Caco-2 (cell line): ENCODE measurements at regions of chr19 and their contacts with region 1.

Region 1: GRCh38 chr19:47713046-47714021 is at the start of gene EHD2:
- DNase-seq: peak in 1 of 2 experiments; percentile 74
- H3K4me3 ChIP-seq: peak within 1 kb of the TSS; percentile 33
- H3K4me3 Mint-ChIP-seq: peak within 1 kb of the TSS; percentile 77
- H3K27ac Mint-ChIP-seq: peak within 1 kb of the TSS; percentile 12
- H3K4me1 ChIP-seq: 0 out of 2 replicates have a peak, but pooled peaks cover 4% of the 10 kb centered on the region
- H3K4me1 Mint-ChIP-seq: peaks cover 10% of the 10 kb centered on the region
- H3K27me3 ChIP-seq: no peaks in the 10 kb centered on the region
- H3K27me3 Mint-ChIP-seq: no peaks in the 10 kb centered on the region
- CTCF ChIP-seq: peak; percentile 90 to 98
- total RNA-seq, gene EHD2: 13.3 and 14.6 TPM in 2 replicates

Region 2: GRCh38 chr19:47637550-47637949 is 75.8 kb before region 1 on chr19:
- CTCF ChIA-PET with region 1: no interaction called
- POLR2A ChIA-PET with region 1: no interaction called
- intact Hi-C with region 1: no loop called
- DNase-seq: no peak
- H3K4me3 ChIP-seq: no peak overlapping the region
- H3K4me3 Mint-ChIP-seq: no peak overlapping the region
- H3K27ac Mint-ChIP-seq: peak overlapping the region; percentile 46
- H3K4me1 ChIP-seq: peaks cover 46% of the 10 kb centered on the region
- H3K4me1 Mint-ChIP-seq: peaks cover 47% of the 10 kb centered on the region
- H3K27me3 ChIP-seq: no peaks in the 10 kb centered on the region
- H3K27me3 Mint-ChIP-seq: no peaks in the 10 kb centered on the region
- CTCF ChIP-seq: no peak

Region 3: GRCh38 chr19:47729992-47730889 is 16.9 kb after region 1 on chr19:
- CTCF ChIA-PET with region 1: interaction called, 11 read pairs
- POLR2A ChIA-PET with region 1: no interaction called
- intact Hi-C with region 1: no loop called
- DNase-seq: peak; percentile 94 to 95
- H3K4me3 ChIP-seq: peak overlapping the region; percentile 44
- H3K4me3 Mint-ChIP-seq: peak overlapping the region; percentile 85
- H3K27ac Mint-ChIP-seq: peak overlapping the region; percentile 93
- H3K4me1 ChIP-seq: peaks cover 11% of the 10 kb centered on the region
- H3K4me1 Mint-ChIP-seq: peaks cover 26% of the 10 kb centered on the region
- H3K27me3 ChIP-seq: no peaks in the 10 kb centered on the region
- H3K27me3 Mint-ChIP-seq: no peaks in the 10 kb centered on the region
- CTCF ChIP-seq: no peak

Region 4: DNA sequence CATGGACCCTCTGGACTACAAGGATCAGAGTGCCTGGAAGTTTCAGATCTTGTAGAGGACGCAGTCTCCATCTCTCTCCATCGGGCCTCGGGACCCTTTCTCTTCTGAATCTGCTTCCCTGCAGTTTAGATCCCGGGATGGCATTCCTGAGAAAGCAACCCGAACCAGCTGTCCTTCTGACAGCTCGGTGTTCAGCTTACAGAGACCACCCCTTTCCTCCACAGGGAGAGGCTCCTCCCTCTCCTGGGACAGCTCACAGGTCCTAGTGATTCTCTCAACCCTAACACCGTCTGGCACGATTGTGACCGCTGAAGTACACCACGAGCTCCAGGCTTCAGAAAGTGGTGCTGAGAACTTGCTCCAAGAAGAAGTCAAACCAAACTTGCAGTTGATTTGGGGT is 126.6 kb after region 1 on chr19:
- CTCF ChIA-PET with region 1: no interaction called
- POLR2A ChIA-PET with region 1: no interaction called
- intact Hi-C with region 1: no loop called
- DNase-seq: no peak
- H3K4me3 ChIP-seq: no peak overlapping the region
- H3K4me3 Mint-ChIP-seq: no peak overlapping the region
- H3K27ac Mint-ChIP-seq: no peak overlapping the region
- H3K4me1 ChIP-seq: no peaks in the 10 kb centered on the region
- H3K4me1 Mint-ChIP-seq: no peaks in the 10 kb centered on the region
- H3K27me3 ChIP-seq: no peaks in the 10 kb centered on the region
- H3K27me3 Mint-ChIP-seq: peaks cover 7% of the 10 kb centered on the region
- CTCF ChIP-seq: no peak